ENCODE measurements at regions of chr4 and their contacts with region 1.

Region 1: GRCh38 chr4:1346781-1347409 is at the start of gene UVSSA:
- DNase-seq: peak; percentile 100
- H3K4me3 ChIP-seq: peak within 1 kb of the TSS; percentile 87 to 98 (median 92)
- H3K27ac ChIP-seq: peak within 1 kb of the TSS; percentile 97 to 100 (median 98)
- H3K4me1 ChIP-seq: peaks cover 17 to 65% (median 34%) of the 10 kb centered on the region in 6 donors
- H3K27me3 ChIP-seq: no peaks in the 10 kb centered on the region
- CTCF ChIP-seq: no peak
- POLR2A ChIP-seq: peak in 2 of 3 donors; percentile 60
- total RNA-seq, gene UVSSA: 23.9 to 54.0 (median 37.1) TPM

Region 2: DNA sequence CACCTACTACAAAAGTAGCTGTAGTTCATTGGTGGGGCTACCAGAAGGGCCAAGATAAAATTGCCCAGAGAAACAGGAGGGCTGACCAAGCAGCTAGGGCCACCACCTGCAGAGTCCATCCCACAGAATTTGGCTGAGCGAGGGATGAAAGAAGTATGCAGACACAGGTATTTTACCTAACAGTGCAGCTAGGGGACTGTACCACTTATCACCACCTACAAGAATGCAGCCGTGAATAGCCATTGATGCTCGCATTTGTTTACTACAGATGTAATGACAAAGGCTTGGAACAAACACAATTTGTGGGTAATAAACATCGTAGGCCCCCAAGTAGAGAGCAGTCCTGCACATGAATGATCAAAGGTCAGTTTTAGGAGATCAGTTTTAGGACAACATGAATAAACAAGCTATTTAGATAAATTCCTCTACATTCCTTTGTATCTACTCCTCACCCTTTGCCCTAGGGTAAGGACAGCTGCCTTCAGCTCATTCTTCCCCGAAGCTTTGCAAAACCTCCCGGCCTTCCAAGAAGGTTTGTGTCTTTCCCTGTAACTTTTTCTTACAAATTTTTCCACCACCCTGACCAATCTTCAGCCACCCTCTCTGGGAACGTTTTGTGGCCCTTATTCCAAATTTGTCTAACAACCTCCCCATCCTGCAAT is 1173.1 kb before region 1 on chr4:
- intact Hi-C with region 1: no loop called
- DNase-seq: no peak
- H3K4me3 ChIP-seq: no peak overlapping the region
- H3K27ac ChIP-seq: no peak overlapping the region
- H3K4me1 ChIP-seq: no peaks in the 10 kb centered on the region
- H3K27me3 ChIP-seq: no peaks in the 10 kb centered on the region
- CTCF ChIP-seq: no peak
- POLR2A ChIP-seq: no peak

Region 3: DNA sequence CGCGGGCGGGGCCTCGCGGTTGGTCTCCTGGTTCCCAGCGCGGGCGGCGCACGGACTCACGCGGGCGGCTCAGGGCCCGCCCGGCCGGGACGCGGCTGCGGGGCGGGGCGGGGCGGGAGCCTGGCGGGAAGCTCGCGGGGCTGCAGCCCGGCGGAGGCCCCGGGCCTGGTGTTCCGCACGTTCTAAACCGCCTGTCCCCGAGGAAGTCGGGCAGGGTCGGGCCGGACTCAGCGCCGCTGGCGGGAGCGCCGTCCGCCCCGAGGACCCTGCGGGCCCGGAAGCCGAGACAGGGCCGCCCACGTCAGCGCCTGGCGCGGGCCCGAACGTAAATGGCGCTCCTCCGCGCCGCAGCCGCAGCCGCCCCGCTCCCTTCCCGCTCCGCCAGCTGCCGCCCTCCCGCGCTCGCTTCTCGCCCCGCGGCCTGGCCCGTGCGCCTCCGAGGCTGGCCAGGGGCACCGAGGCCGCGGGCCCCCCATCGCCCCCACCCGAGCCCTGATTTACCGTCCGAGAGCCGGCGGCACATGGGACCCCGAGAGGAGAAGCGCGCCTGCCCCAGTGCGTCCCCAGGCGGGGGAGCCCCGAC is 97.7 kb before region 1 on chr4:
- intact Hi-C with region 1: loop called (anchors 2 kb)
- DNase-seq: peak; percentile 97
- H3K4me3 ChIP-seq: peak overlapping the region; percentile 57 to 93 (median 68)
- H3K27ac ChIP-seq: peak overlapping the region; percentile 95 to 99 (median 98)
- H3K4me1 ChIP-seq: peaks cover 46 to 84% (median 61%) of the 10 kb centered on the region in 6 donors
- H3K27me3 ChIP-seq: no peaks in the 10 kb centered on the region
- CTCF ChIP-seq: no peak
- POLR2A ChIP-seq: peak in 1 of 3 donors; percentile 41

Region 4: GRCh38 chr4:1289207-1290164 is 57.4 kb before region 1 on chr4 and contains the start of gene MAEA:
- intact Hi-C with region 1: loop called (anchors 10 kb)
- DNase-seq: peak; percentile 98
- H3K4me3 ChIP-seq: peak within 1 kb of the TSS; percentile 64 to 97 (median 90)
- H3K27ac ChIP-seq: peak within 1 kb of the TSS; percentile 84 to 95 (median 90)
- H3K4me1 ChIP-seq: peaks cover 38 to 55% (median 50%) of the 10 kb centered on the region in 6 donors
- H3K27me3 ChIP-seq: no peaks in the 10 kb centered on the region
- CTCF ChIP-seq: peak in 2 of 11 experiments; percentile 31 to 37
- POLR2A ChIP-seq: peak in 2 of 3 donors; percentile 77 to 78
- total RNA-seq, gene MAEA: 64.3 to 112 (median 85.6) TPM

Region 5: GRCh38 chr4:1384675-1385372 is 37.9 kb after region 1 on chr4:
- intact Hi-C with region 1: no loop called
- DNase-seq: peak; percentile 62
- H3K4me3 ChIP-seq: no peak overlapping the region
- H3K27ac ChIP-seq: no peak overlapping the region
- H3K4me1 ChIP-seq: no peaks in the 10 kb centered on the region
- H3K27me3 ChIP-seq: no peaks in the 10 kb centered on the region
- CTCF ChIP-seq: no peak
- POLR2A ChIP-seq: no peak

Measured in spleen (tissue), 13 donors.